ENCODE measurements at regions of chr19 and their contacts with region 1.

Region 1: DNA sequence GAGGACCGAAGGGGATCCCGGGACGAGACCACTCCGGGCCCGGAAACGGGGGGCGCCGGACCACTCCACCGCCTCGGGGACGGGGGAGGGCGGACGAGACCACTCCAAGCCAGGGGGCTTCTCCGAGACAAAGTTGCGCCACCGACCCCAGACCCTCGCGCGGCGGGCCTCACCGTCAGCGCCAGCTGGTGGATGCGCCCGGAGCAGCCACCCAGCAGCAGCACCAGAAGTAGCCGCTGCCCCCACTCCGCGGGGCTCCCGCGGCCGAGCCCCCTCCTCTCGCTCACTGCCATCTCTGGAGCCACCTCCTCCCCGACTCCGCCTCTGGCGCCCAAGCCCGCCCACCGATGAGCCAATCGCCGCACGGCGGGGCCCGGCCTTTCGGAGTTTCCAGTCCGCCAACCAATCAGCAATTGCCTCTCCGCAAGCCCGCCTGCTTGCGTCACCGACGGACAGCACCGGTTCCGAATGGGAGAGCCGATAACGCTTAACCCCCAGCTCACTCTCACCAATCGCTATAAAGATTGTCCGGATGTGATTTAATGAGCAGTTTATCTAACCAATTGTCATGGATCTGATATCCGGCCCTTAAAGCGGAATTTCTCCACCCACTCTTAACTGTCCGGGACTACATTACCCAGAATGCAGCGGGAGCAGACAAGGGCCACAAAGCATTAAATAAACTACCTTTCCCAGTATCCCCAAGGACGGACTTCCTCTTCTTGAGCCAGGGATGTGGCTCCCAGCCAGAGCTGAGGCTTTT is at the start of gene GPR108:
- DNase-seq: peak; percentile 99
- ATAC-seq: peak; percentile 70 to 89 (median 77)
- H3K4me3 ChIP-seq: peak within 1 kb of the TSS; percentile 80
- H3K4me3 Mint-ChIP-seq: peak within 1 kb of the TSS; percentile 96
- H3K27ac ChIP-seq: peak within 1 kb of the TSS; percentile 94
- H3K27ac Mint-ChIP-seq: peak within 1 kb of the TSS; percentile 98
- H3K4me1 ChIP-seq: peaks cover 53% of the 10 kb centered on the region
- H3K4me1 Mint-ChIP-seq: peaks cover 29 to 41% of the 10 kb centered on the region in 2 donors
- H3K27me3 ChIP-seq: no peaks in the 10 kb centered on the region
- H3K27me3 Mint-ChIP-seq: no peaks in the 10 kb centered on the region
- CTCF ChIP-seq: no peak
- total RNA-seq, gene GPR108: 66.1 to 78.0 (median 76.9) TPM

Region 2: DNA sequence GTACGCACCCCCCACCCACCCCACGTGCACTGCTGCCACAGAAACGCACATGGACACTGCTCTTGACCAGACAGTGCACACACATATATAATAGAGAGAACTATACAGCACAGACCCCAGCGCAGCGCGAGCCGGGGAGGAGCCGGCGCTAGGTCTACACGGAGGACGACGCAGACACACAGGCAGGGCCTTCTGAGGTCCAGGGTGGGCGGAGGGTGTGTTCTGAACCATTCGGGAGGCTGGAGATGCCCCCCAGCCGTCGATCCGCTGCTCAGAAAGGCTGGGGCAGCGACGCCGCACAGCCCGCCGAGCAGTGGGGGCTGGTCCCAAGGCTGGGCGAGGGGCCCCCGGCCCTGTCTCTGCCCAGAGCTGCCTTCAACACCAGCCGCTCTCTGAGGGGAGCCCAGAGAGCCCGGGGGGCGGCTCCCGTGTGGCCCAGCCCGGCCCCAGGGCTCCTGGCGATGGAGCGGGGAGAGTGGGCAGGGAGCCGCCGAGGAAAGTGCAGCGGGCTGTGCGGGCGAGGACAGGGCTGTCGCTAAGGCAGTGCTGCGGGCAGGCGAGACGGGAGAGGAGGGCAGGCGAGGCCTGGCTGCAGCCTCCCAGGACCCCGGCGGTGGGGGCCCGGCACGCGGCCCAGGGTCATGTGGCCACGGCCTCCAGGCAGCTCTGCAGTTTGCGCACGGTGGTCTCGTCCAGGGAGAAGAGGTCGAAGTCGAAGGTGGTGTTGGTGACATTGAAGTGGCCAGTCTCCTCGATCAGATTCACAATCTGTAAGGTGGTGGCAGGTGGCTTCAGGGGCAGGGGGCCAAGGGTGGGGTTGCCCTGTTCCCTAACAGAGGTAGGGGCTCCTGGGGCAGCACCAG is 524.8 kb before region 1 on chr19:
- intact Hi-C with region 1: no loop called
- DNase-seq: no peak
- ATAC-seq: peak in 1 of 3 donors; percentile 32
- H3K4me3 ChIP-seq: no peak overlapping the region
- H3K4me3 Mint-ChIP-seq: no peak overlapping the region
- H3K27ac ChIP-seq: no peak overlapping the region
- H3K27ac Mint-ChIP-seq: peak overlapping the region in 1 of 2 donors; percentile 50
- H3K4me1 ChIP-seq: no peaks in the 10 kb centered on the region
- H3K4me1 Mint-ChIP-seq: no peaks in the 10 kb centered on the region
- H3K27me3 ChIP-seq: no peaks in the 10 kb centered on the region
- H3K27me3 Mint-ChIP-seq: no peaks in the 10 kb centered on the region
- CTCF ChIP-seq: no peak

Region 3: DNA sequence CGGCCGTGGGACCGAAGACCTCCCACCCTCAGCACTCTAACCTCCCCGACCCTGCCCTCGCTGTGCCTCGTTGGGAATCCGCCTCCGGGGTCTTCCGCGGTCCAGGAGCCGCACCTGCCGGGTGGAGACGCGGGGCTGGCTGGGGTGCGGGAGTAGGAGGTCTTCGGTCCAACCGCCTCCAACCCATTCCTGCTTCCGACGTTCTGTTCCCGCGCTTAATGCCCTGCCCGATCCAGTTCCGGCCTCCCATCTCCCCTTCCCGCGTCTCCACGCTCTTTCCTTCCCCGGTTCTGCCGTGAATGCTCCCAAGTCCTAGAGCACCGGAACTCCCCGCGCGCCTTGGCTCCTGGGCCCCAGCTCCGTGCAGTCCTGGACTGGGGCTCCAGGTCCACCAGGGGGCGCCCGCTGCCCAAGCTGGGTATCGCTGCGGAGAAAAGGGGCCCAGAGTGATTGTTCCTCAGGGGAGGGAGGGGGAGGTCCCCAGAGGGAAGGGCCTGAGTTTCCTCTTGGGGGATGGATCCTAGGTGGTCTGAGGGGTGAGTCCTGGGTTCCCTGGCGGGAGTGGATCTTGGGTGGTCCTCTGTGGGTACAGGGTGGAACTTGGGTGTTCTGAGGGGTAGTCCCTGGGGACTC is 220.7 kb before region 1 on chr19:
- intact Hi-C with region 1: loop called (anchors 5 kb)
- DNase-seq: peak; percentile 93 to 94
- ATAC-seq: peak; percentile 84 to 89 (median 86)
- H3K4me3 ChIP-seq: peak overlapping the region; percentile 89
- H3K4me3 Mint-ChIP-seq: peak overlapping the region; percentile 95
- H3K27ac ChIP-seq: no peak overlapping the region
- H3K27ac Mint-ChIP-seq: peak overlapping the region; percentile 67 to 97
- H3K4me1 ChIP-seq: peaks cover 36% of the 10 kb centered on the region
- H3K4me1 Mint-ChIP-seq: peaks cover 29 to 36% of the 10 kb centered on the region in 2 donors
- H3K27me3 ChIP-seq: no peaks in the 10 kb centered on the region
- H3K27me3 Mint-ChIP-seq: no peaks in the 10 kb centered on the region
- CTCF ChIP-seq: peak; percentile 92

Region 4: DNA sequence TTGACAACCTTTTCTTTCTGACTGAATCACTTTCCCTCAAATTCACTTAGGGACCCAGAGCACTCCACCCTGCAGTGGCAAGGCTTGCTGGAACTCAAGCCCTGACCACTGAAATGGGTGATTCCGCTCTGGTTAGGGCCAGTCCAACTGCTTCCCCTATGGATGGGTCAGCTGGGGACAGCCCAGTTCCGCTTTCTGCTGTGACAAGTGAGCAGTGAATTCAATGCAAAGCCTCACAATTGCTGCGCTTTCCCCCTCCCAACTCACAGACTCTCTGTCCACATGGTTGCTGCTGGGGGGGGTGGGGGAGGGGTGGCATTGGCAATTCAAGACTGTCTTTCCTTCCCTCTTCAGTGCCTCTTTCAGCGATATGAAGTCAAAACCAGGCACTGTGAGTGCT is 165.2 kb before region 1 on chr19:
- intact Hi-C with region 1: no loop called
- DNase-seq: no peak
- ATAC-seq: peak in 1 of 3 donors; percentile 39
- H3K4me3 ChIP-seq: no peak overlapping the region
- H3K4me3 Mint-ChIP-seq: no peak overlapping the region
- H3K27ac ChIP-seq: no peak overlapping the region
- H3K27ac Mint-ChIP-seq: no peak overlapping the region
- H3K4me1 ChIP-seq: peaks cover 6% of the 10 kb centered on the region
- H3K4me1 Mint-ChIP-seq: no peaks in the 10 kb centered on the region
- H3K27me3 ChIP-seq: peaks cover 8% of the 10 kb centered on the region
- H3K27me3 Mint-ChIP-seq: peaks cover 14 to 23% of the 10 kb centered on the region in 2 donors
- CTCF ChIP-seq: no peak

Region 5: GRCh38 chr19:6632002-6632621 is 105.4 kb before region 1 on chr19:
- intact Hi-C with region 1: loop called (anchors 1 kb)
- DNase-seq: peak; percentile 65 to 93
- ATAC-seq: peak; percentile 92 to 98 (median 95)
- H3K4me3 ChIP-seq: no peak overlapping the region
- H3K4me3 Mint-ChIP-seq: peak overlapping the region; percentile 4
- H3K27ac ChIP-seq: no peak overlapping the region
- H3K27ac Mint-ChIP-seq: peak overlapping the region in 1 of 2 donors; percentile 66
- H3K4me1 ChIP-seq: peaks cover 16% of the 10 kb centered on the region
- H3K4me1 Mint-ChIP-seq: peaks cover 11 to 20% of the 10 kb centered on the region in 2 donors
- H3K27me3 ChIP-seq: no peaks in the 10 kb centered on the region
- H3K27me3 Mint-ChIP-seq: peaks cover 0 to 7% of the 10 kb centered on the region in 2 donors
- CTCF ChIP-seq: peak; percentile 81

Region 6: DNA sequence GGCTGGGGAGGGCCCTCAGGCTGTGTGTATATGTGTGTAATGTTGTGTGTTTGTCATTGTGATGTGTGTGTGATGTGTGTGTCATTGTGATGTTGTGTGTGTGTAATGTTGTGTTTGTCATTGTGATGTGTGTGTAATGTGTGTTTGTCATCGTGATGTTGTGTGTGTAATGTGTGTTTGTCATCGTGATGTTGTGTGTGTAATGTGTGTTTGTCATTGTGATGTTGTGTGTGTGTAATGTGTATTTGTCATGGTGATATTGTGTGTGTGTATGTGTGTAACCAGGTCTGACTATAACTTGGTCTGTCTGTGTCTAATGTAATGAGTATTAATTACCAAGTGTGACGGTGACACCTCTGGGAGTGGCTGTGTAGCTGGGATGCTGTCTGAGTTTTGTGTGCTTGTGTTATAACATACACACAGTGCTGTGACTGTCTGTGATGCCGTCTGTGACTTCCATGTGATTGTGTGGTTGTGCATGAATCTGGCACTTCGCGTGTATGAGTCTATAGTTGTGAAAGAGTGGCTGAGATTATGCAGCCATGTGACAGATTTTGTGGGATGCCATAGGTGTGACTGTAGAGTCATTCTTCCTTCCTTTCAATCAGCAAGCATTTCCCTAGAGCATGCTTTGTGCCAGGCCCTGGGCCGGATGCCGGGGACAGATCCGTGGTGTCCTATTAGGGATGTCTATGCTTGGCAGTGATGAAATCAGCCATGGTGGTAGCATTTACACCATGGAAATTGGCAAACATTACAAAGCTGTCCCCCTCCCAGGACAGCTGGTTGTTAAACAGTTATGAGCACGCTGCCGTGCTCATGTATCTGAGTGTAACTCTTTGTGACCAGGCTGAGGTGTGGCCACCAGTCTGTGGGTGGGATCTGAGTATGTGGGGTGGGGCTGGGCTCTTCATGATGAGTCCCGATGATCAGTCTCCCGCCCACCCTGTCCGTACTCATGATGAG is 73.9 kb before region 1 on chr19:
- intact Hi-C with region 1: loop called (anchors 2 kb)
- DNase-seq: peak; percentile 56 to 77
- ATAC-seq: peak; percentile 69 to 83 (median 69)
- H3K4me3 ChIP-seq: no peak overlapping the region
- H3K4me3 Mint-ChIP-seq: no peak overlapping the region
- H3K27ac ChIP-seq: peak overlapping the region; percentile 66
- H3K27ac Mint-ChIP-seq: no peak overlapping the region
- H3K4me1 ChIP-seq: peaks cover 92% of the 10 kb centered on the region
- H3K4me1 Mint-ChIP-seq: peaks cover 36 to 46% of the 10 kb centered on the region in 2 donors
- H3K27me3 ChIP-seq: no peaks in the 10 kb centered on the region
- H3K27me3 Mint-ChIP-seq: no peaks in the 10 kb centered on the region
- CTCF ChIP-seq: no peak

Region 7: DNA sequence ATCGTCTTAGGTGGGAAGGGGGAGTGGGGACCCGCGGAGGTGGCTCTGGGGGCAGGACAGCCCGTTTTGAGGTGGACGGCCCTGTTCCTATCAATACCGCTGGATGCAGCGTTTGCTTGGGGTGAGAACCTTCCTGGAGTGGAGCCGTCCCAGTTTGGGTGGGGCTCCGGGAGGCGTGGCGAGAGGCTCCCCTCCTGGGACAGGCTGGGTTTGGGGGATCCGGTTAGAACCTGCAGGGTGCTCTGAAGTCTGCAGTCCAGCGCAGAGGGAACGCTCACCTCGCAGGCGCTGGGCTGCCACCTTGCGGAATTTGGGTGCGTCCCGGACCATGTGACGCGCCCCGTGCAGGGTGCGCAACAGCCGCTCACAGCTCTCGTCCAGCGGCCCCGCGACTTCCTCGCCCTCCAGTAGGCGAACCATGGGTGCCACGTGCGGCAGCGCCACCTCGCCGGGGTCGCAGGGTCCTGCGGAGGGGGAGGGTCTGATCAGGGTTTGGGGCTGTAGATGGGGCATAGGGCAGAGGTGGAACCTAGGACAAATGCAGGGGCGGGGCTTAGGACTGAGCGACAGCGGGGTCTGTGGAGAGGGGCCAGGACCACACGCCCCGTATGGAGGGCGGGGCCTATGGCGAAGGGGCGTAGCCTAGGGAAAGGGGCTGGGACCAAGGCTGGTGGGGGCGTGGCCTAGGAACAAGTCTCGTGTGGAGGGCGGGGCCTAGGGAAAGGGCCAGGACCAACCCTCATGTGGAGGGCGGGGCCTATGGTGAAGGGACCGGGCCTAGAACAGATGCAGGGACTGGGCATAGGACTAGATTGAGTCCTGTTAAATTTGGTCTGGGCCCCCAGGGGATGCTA is 15.9 kb after region 1 on chr19:
- intact Hi-C with region 1: no loop called
- DNase-seq: peak; percentile 66 to 89
- ATAC-seq: peak; percentile 91 to 92 (median 92)
- H3K4me3 ChIP-seq: peak overlapping the region; percentile 41
- H3K4me3 Mint-ChIP-seq: peak overlapping the region; percentile 77
- H3K27ac ChIP-seq: peak overlapping the region; percentile 27
- H3K27ac Mint-ChIP-seq: peak overlapping the region; percentile 71 to 78
- H3K4me1 ChIP-seq: peaks cover 13% of the 10 kb centered on the region
- H3K4me1 Mint-ChIP-seq: peaks cover 6 to 23% of the 10 kb centered on the region in 2 donors
- H3K27me3 ChIP-seq: no peaks in the 10 kb centered on the region
- H3K27me3 Mint-ChIP-seq: no peaks in the 10 kb centered on the region
- CTCF ChIP-seq: peak; percentile 12

Region 8: GRCh38 chr19:6767357-6768235 is 30.1 kb after region 1 on chr19 and contains the start of gene SH2D3A:
- intact Hi-C with region 1: loop called (anchors 1 kb)
- DNase-seq: peak; percentile 79 to 97
- ATAC-seq: peak; percentile 60 to 80 (median 63)
- H3K4me3 ChIP-seq: peak within 1 kb of the TSS; percentile 65
- H3K4me3 Mint-ChIP-seq: peak within 1 kb of the TSS; percentile 90
- H3K27ac ChIP-seq: peak within 1 kb of the TSS; percentile 96
- H3K27ac Mint-ChIP-seq: peak within 1 kb of the TSS; percentile 85 to 96
- H3K4me1 ChIP-seq: peaks cover 43% of the 10 kb centered on the region
- H3K4me1 Mint-ChIP-seq: peaks cover 34 to 44% of the 10 kb centered on the region in 2 donors
- H3K27me3 ChIP-seq: no peaks in the 10 kb centered on the region
- H3K27me3 Mint-ChIP-seq: no peaks in the 10 kb centered on the region
- CTCF ChIP-seq: no peak
- total RNA-seq, gene SH2D3A: 14.6 to 20.1 (median 15.3) TPM

Region 9: GRCh38 chr19:6801485-6802086 is 64.1 kb after region 1 on chr19:
- intact Hi-C with region 1: loop called (anchors 1 kb)
- DNase-seq: peak; percentile 69 to 94
- ATAC-seq: peak; percentile 45 to 65 (median 49)
- H3K4me3 ChIP-seq: peak overlapping the region; percentile 43
- H3K4me3 Mint-ChIP-seq: peak overlapping the region; percentile 99
- H3K27ac ChIP-seq: peak overlapping the region; percentile 84
- H3K27ac Mint-ChIP-seq: peak overlapping the region; percentile 97 to 99
- H3K4me1 ChIP-seq: peaks cover 54% of the 10 kb centered on the region
- H3K4me1 Mint-ChIP-seq: peaks cover 59 to 61% of the 10 kb centered on the region in 2 donors
- H3K27me3 ChIP-seq: no peaks in the 10 kb centered on the region
- H3K27me3 Mint-ChIP-seq: no peaks in the 10 kb centered on the region
- CTCF ChIP-seq: no peak

Measured in natural killer cell (primary cell).